ENCODE measurements at regions of chr4 and their contacts with region 1.

Region 1: GRCh38 chr4:15882675-15883086 is 55.9 kb downstream of the FGFBP1 start:
- DNase-seq: peak; percentile 90
- H3K4me3 Mint-ChIP-seq: no peak overlapping the region
- H3K27ac Mint-ChIP-seq: peak overlapping the region; percentile 35
- H3K4me1 Mint-ChIP-seq: peaks cover 5% of the 10 kb centered on the region
- H3K27me3 Mint-ChIP-seq: no peaks in the 10 kb centered on the region
- CTCF ChIP-seq: peak; percentile 88

Region 2: DNA sequence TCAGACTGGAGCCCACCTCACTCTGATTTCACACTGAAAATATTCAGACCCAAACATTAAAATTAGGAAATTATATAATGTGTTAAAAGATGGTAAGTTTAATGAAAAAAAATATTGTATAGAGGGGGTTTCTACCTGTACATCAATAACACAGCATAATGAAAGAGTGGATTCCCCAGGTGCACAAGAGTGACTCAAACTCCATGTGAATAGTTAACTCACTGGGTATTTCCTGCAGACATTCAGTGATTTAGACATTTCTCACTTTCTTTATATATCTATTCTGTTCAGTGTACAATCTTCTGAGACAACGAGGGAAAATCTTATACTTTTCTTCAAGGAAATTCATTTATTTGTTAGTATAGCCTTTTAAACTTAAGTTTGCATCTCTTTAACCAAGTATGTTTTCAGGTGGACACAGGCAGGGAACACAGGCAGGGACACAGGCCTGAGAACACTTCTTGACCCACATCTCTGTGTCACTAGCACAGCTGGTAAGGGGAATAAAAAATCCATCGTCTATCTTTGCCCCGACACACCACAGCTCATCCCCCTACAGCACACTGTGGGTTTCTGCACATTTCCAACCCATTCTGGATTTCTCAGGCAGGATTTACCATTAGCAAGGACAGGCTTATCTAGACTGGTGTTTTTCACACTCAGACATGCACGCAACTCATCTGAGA is 1729.7 kb before region 1 on chr4:
- CTCF ChIA-PET with region 1: no interaction called
- POLR2A ChIA-PET with region 1: no interaction called
- intact Hi-C with region 1: no loop called
- DNase-seq: no peak
- H3K4me3 Mint-ChIP-seq: no peak overlapping the region
- H3K27ac Mint-ChIP-seq: no peak overlapping the region
- H3K4me1 Mint-ChIP-seq: no peaks in the 10 kb centered on the region
- H3K27me3 Mint-ChIP-seq: no peaks in the 10 kb centered on the region
- CTCF ChIP-seq: no peak

Region 3: GRCh38 chr4:15855804-15856475 is 26.7 kb before region 1 on chr4:
- CTCF ChIA-PET with region 1: interaction called, 13 read pairs
- POLR2A ChIA-PET with region 1: no interaction called
- intact Hi-C with region 1: no loop called
- DNase-seq: no peak
- H3K4me3 Mint-ChIP-seq: no peak overlapping the region
- H3K27ac Mint-ChIP-seq: no peak overlapping the region
- H3K4me1 Mint-ChIP-seq: no peaks in the 10 kb centered on the region
- H3K27me3 Mint-ChIP-seq: peaks cover 9% of the 10 kb centered on the region
- CTCF ChIP-seq: no peak

Region 4: DNA sequence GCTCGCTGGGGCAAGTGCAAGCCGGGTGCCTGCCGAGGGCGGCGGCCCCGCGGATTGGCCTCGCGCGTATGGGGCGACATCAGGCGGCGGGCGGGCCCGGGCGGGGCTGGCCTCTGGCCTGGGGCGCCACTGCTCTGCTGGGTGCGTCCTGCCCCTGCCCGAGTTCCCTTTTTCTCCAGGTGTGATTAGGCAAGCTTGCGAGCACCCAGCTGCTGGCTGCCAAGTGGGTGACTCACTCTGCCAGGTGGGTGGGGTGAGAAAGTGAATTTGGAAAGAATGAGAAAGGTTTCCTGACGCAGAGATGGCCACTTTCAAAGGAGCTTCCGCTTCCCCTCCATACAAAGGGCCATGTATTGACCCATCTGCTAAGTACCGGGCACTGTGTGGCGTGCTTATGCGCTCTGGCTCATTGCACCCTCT is 23.4 kb after region 1 on chr4:
- CTCF ChIA-PET with region 1: interaction called, 18 read pairs
- POLR2A ChIA-PET with region 1: interaction called, 3 read pairs
- intact Hi-C with region 1: no loop called
- DNase-seq: peak; percentile 99
- H3K4me3 Mint-ChIP-seq: peak overlapping the region; percentile 52
- H3K27ac Mint-ChIP-seq: peak overlapping the region; percentile 33
- H3K4me1 Mint-ChIP-seq: peaks cover 7% of the 10 kb centered on the region
- H3K27me3 Mint-ChIP-seq: no peaks in the 10 kb centered on the region
- CTCF ChIP-seq: no peak

Region 5: DNA sequence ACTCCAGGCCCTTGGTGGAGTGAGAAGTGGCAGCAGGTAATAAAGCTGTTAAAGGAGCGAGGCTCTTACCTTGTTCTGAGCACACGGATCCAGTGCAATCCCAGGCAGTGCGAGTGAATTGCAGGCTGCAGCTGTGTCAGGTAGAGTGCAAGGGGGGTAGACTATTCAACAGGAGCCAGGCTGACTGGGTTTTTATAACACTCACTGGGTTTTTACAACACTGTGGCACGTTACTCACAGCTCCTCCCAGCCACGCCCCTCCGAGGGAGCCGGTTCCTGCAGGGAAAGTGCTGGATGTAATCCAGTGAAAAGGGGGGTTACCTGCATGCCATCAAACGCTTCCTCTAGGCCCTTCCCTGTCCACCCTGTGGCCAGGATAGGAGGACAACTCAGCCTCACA is 55.5 kb after region 1 on chr4:
- CTCF ChIA-PET with region 1: interaction called, 55 read pairs
- POLR2A ChIA-PET with region 1: interaction called, 3 read pairs
- intact Hi-C with region 1: loop called (anchors 5 kb)
- DNase-seq: peak; percentile 80
- H3K4me3 Mint-ChIP-seq: peak overlapping the region; percentile 58
- H3K27ac Mint-ChIP-seq: no peak overlapping the region
- H3K4me1 Mint-ChIP-seq: peaks cover 30% of the 10 kb centered on the region
- H3K27me3 Mint-ChIP-seq: no peaks in the 10 kb centered on the region
- CTCF ChIP-seq: no peak

Region 6: GRCh38 chr4:15963001-15963451 is 80.3 kb after region 1 on chr4 and contains the start of gene FGFBP2:
- CTCF ChIA-PET with region 1: interaction called, 40 read pairs
- POLR2A ChIA-PET with region 1: no interaction called
- intact Hi-C with region 1: no loop called
- DNase-seq: peak; percentile 44
- H3K4me3 Mint-ChIP-seq: no peak within 1 kb of the TSS
- H3K27ac Mint-ChIP-seq: no peak within 1 kb of the TSS
- H3K4me1 Mint-ChIP-seq: no peaks in the 10 kb centered on the region
- H3K27me3 Mint-ChIP-seq: peaks cover 17% of the 10 kb centered on the region
- CTCF ChIP-seq: peak; percentile 18
- total RNA-seq, gene FGFBP2: not detected in 2 replicates

Region 7: GRCh38 chr4:16001484-16001858 is 118.8 kb after region 1 on chr4:
- CTCF ChIA-PET with region 1: interaction called, 32 read pairs
- POLR2A ChIA-PET with region 1: interaction called, 3 read pairs
- intact Hi-C with region 1: loop called (anchors 1 kb)
- DNase-seq: peak; percentile 75
- H3K4me3 Mint-ChIP-seq: no peak overlapping the region
- H3K27ac Mint-ChIP-seq: no peak overlapping the region
- H3K4me1 Mint-ChIP-seq: no peaks in the 10 kb centered on the region
- H3K27me3 Mint-ChIP-seq: no peaks in the 10 kb centered on the region
- CTCF ChIP-seq: peak; percentile 94

Measured in MCF 10A (cell line).